Heart right ventricle (tissue), 16 donors: ENCODE measurements at regions of chr17 and their contacts with region 1.

Region 1: GRCh38 chr17:43360739-43361505 is 37.9 kb upstream of the ARL4D start:
- DNase-seq: peak; percentile 80 to 94
- ATAC-seq: peak; percentile 86 to 93 (median 90)
- H3K4me3 ChIP-seq: peak overlapping the region; percentile 40 to 72 (median 62)
- H3K27ac ChIP-seq: peak overlapping the region; percentile 75 to 99 (median 94)
- H3K4me1 ChIP-seq: peaks cover 0 to 20% (median 18%) of the 10 kb centered on the region in 9 donors
- H3K27me3 ChIP-seq: no peaks in the 10 kb centered on the region
- CTCF ChIP-seq: no peak

Region 2: DNA sequence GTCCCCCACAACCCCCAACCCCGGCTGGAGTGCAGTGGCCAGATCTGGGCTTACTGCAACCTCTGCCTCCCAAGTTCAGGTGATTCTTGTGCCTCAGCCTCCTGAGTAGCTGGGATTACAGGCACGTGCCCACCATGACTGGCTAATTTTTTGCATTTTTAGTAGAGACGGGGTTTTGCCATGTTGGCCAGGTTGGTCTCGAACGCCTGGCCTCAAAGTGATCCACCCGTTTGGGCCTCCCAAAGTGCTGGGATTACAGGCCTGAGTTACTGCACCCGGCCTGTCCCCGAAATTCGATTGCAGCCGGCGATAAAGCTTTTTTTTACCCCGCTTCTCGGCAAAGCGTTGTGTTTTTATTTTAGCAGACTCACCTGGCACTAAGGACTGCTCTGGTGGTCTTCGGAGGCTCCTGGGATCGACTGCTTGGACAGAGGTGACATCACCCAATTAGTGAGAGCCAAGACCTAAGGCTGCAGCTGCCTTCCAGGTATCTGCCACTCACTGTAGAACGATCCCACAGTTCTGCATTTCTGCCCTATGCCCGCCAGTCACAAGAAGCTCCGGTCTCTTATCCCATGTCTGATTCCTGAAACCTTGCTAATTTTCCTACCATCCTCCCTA is 44.3 kb before region 1 on chr17:
- intact Hi-C with region 1: loop called in 1 of 10 experiments (anchors 10 kb)
- DNase-seq: no peak
- ATAC-seq: no peak
- H3K4me3 ChIP-seq: no peak overlapping the region
- H3K27ac ChIP-seq: no peak overlapping the region
- H3K4me1 ChIP-seq: no peaks in the 10 kb centered on the region
- H3K27me3 ChIP-seq: no peaks in the 10 kb centered on the region
- CTCF ChIP-seq: no peak

Region 3: DNA sequence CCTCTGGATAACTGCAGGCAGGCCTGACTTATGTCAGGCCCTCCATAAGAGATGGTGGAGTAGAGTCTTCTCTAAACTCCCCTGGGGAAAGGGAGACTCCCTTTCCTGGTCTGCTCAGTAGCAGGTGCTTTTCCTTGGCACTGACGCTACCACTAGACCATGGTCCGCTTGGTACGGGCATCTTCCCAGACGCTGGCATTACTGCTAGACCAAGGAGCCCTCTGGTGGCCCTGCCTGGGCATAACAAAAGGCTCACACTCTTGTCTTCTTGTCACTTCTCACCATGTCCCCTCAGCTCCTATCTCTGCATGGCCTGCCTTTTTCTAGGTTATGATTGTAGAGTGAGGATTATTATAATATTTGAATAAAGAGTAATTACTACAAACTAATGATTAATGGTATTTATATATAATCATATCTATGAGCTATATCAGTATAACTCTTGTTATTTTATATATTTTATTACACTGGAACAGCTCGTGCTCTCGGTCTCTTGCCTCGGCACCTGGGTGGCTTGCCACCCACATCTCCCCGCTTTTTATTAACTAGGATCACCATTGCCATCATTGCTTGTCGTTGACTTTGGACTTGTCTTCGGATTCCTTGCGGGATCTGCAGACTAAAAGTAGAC is 21.9 kb before region 1 on chr17:
- intact Hi-C with region 1: loop called in 1 of 10 experiments (anchors 1 kb)
- DNase-seq: peak; percentile 70
- ATAC-seq: no peak
- H3K4me3 ChIP-seq: no peak overlapping the region
- H3K27ac ChIP-seq: no peak overlapping the region
- H3K4me1 ChIP-seq: peaks cover 0 to 44% (median 27%) of the 10 kb centered on the region in 9 donors
- H3K27me3 ChIP-seq: no peaks in the 10 kb centered on the region
- CTCF ChIP-seq: peak; percentile 50 to 88 (median 72)

Region 4: DNA sequence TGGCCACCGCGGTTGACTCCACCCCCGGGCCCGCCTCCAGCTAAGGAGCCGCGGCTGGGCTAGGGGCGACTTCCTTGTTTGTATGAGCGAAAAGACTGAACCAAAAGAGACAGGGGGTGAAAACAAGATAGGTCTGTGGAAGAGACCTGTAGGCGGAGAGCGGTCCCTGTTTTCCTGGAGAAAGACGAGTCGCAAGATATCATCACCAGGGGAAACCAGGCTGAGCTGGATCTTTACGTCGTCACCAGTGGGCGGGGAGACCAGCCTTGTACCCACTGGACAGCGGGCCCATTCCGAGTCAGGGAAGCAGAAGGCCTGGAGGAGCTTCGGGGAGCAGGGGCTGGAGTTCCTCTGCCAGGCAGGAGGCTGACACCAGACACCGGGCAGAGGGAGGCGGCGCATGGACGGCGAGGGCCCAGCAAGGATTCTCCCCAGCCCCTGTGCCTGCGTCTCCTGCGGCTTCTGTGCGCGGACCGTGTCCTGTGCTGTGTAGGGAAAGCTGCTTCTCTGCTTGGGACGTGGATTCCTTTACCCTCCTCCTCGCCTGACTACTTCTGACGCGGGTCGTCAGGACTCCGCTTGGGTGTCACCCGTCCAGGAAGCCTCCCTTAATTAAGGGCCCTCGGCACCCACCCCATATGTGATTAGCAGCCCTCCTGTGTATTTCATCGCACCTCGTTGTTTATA is 27.6 kb after region 1 on chr17:
- intact Hi-C with region 1: loop called in 1 of 10 experiments (anchors 2 kb)
- DNase-seq: peak; percentile 88 to 92
- ATAC-seq: peak; percentile 90 to 95 (median 92)
- H3K4me3 ChIP-seq: peak overlapping the region; percentile 53 to 75 (median 66)
- H3K27ac ChIP-seq: peak overlapping the region; percentile 93 to 99 (median 98)
- H3K4me1 ChIP-seq: peaks cover 0 to 21% (median 11%) of the 10 kb centered on the region in 9 donors
- H3K27me3 ChIP-seq: no peaks in the 10 kb centered on the region
- CTCF ChIP-seq: no peak

Region 5: DNA sequence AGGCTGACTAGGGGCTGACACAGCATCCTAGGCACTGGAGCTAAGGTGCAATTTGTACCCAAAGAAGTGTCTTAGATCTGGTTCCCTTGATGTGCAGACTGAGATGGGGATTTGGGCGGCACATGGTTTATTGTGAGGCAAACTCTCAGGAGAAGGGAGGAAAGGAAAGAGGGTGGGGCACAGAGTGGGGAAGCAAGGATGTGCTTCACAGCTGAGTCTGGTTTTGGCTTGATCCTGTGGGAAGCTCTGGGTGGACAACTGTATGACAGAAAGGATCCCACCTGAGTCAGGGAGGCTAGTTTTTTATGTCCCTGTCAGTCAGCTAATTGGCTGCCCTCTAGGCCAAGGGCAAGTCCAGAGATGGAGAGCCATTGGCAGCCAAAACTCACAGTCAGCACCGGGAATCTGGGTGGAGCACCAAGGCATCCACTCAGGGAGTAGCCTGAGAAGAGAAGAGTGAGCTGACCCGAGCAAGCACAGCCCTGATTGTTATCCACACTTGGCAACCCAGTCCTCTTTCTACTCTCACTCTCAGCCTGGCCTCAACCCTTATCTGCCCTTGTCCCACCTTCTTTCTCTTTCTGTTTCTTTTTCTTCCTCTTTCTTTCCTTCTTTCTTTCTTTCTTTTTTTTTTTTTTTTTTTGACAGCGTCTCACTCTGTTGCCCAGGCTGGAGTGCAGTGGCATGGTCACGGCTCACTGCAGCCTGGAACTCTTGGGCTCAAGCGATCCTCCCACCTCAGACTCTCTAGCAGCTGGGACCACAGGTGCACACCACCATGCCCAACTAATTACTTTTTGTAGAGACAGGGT is 49.8 kb after region 1 on chr17:
- intact Hi-C with region 1: no loop called
- DNase-seq: no peak
- ATAC-seq: peak in 7 of 8 donors; percentile 62 to 78 (median 69)
- H3K4me3 ChIP-seq: no peak overlapping the region
- H3K27ac ChIP-seq: peak overlapping the region in 4 of 10 donors; percentile 1 to 49 (median 34)
- H3K4me1 ChIP-seq: peaks cover 0 to 27% (median 13%) of the 10 kb centered on the region in 9 donors
- H3K27me3 ChIP-seq: no peaks in the 10 kb centered on the region
- CTCF ChIP-seq: no peak